ENCODE measurements at regions of chr9 and their contacts with region 1.

Region 1: GRCh38 chr9:104747558-104748358 is at the start of gene NIPSNAP3A:
- DNase-seq: peak; percentile 94
- ATAC-seq: peak; percentile 97
- total RNA-seq, gene NIPSNAP3A: 21.6 TPM

Region 2: GRCh38 chr9:104093647-104094533 is 653.9 kb before region 1 on chr9 and contains the start of gene SMC2:
- intact Hi-C with region 1: loop called (anchors 5 kb)
- DNase-seq: peak; percentile 96
- ATAC-seq: peak; percentile 97
- total RNA-seq, gene SMC2: 9.0 TPM

Region 3: GRCh38 chr9:104633976-104634520 is 113.7 kb before region 1 on chr9:
- intact Hi-C with region 1: no loop called
- DNase-seq: no peak
- ATAC-seq: no peak

Measured in Right ventricle myocardium inferior (tissue), 1 donor.